Caco-2 (cell line): ENCODE measurements at regions of chr17 and their contacts with region 1.

Region 1: DNA sequence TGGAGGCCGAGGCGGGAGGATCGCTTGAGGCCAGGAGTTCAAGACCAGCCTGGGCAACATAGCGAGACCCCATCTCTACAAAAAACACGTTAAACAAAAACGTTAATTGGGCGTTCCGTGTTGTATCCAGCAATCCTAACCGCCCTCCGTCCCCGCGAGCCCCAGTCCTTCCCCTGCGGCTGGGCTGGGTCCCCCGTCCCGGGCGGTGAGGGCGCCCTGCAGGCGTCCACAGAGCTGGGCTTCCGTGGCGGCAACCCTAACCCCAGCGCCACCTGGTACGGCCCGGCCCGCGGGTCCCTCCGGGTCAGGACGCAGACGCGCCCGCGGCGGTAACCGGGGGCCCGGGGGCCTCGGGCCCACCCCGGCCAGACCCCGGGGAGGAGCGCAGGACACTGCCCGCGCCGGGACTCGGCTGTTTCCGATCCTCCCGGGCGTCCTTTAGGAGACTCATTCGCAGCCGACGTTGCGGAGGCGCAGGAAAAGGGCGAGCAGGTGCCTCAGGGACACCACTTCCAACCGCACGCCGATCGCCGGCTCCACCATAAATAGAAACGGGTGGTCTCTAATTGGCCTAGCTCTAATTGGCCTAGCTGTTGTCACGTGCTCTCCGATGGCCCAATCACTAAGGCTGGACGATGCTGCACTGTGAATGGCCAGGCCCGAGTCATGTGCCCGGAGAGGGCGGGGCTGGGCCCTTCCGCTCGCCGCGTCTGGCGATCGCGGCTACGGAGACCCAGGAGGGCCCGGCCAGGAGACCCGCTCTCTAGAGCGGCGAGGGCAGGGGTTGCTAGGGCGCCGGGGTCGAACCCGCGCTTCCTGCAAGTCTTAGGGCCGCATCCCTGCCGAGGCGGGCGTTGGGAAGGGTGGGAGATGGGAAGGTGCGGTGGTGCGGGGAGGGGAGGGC is 19.0 kb upstream of the CSNK1D start:
- DNase-seq: peak; percentile 97 to 98
- H3K4me3 ChIP-seq: peak overlapping the region; percentile 83
- H3K4me3 Mint-ChIP-seq: peak overlapping the region; percentile 75
- H3K27ac Mint-ChIP-seq: peak overlapping the region; percentile 73
- H3K4me1 ChIP-seq: peaks cover 67% of the 10 kb centered on the region
- H3K4me1 Mint-ChIP-seq: peaks cover 46% of the 10 kb centered on the region
- H3K27me3 ChIP-seq: no peaks in the 10 kb centered on the region
- H3K27me3 Mint-ChIP-seq: no peaks in the 10 kb centered on the region
- CTCF ChIP-seq: no peak

Region 2: GRCh38 chr17:82267575-82268379 is 24.7 kb before region 1 on chr17:
- CTCF ChIA-PET with region 1: interaction called, 5 read pairs
- POLR2A ChIA-PET with region 1: interaction called, 9 read pairs
- intact Hi-C with region 1: loop called (anchors 1 kb)
- DNase-seq: peak; percentile 92 to 95
- H3K4me3 ChIP-seq: peak overlapping the region; percentile 30
- H3K4me3 Mint-ChIP-seq: peak overlapping the region; percentile 73
- H3K27ac Mint-ChIP-seq: peak overlapping the region; percentile 92
- H3K4me1 ChIP-seq: peaks cover 63% of the 10 kb centered on the region
- H3K4me1 Mint-ChIP-seq: peaks cover 55% of the 10 kb centered on the region
- H3K27me3 ChIP-seq: no peaks in the 10 kb centered on the region
- H3K27me3 Mint-ChIP-seq: no peaks in the 10 kb centered on the region
- CTCF ChIP-seq: no peak

Region 3: DNA sequence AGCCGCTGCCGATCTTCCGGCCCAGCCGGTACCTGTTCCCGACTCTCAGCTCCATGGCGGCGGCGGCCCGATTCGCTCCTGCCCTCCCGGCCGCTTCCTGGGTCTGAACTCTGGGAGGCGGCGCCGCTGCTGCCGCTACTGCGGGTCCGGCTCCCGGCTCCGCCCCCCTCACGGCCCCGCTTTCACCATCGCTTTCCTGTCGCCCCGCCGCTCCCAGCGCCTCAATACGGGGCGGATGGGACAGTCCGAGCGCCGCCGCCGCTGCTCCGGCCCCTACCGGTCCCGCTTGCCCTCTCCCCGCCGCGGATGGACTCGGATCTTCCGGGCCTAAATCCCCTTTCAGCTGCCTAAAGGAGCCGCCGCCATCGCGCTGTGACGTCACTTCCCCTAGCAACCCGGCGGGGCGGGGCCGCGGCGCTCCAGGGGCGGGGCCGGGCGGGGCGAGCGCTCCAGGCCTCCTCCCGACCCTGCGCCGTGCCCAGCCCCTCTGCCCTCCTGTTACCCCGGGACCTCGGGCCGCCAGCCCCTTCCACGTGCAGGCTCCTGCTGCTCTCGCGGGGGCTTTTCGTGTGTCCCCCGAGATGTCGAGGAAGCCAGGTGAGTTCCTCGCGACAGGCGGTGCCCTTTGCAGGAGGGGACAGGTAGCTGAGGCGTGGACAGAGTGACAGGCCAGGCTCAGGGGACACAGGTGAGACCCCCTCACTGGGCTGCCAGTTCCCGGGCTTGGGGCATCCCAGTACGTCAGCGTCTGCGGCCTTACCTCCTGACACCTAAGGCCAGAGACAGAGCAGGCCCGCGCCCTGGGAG is 19.0 kb before region 1 on chr17 and contains the start of gene CSNK1D:
- CTCF ChIA-PET with region 1: no interaction called
- POLR2A ChIA-PET with region 1: interaction called, 9 read pairs
- intact Hi-C with region 1: loop called (anchors 2 kb)
- DNase-seq: peak; percentile 88 to 94
- H3K4me3 ChIP-seq: peak within 1 kb of the TSS; percentile 94
- H3K4me3 Mint-ChIP-seq: peak within 1 kb of the TSS; percentile 75
- H3K27ac Mint-ChIP-seq: peak within 1 kb of the TSS; percentile 98
- H3K4me1 ChIP-seq: peaks cover 62% of the 10 kb centered on the region
- H3K4me1 Mint-ChIP-seq: peaks cover 51% of the 10 kb centered on the region
- H3K27me3 ChIP-seq: no peaks in the 10 kb centered on the region
- H3K27me3 Mint-ChIP-seq: no peaks in the 10 kb centered on the region
- CTCF ChIP-seq: no peak
- total RNA-seq, gene CSNK1D: 196 TPM in 2 replicates

Region 4: DNA sequence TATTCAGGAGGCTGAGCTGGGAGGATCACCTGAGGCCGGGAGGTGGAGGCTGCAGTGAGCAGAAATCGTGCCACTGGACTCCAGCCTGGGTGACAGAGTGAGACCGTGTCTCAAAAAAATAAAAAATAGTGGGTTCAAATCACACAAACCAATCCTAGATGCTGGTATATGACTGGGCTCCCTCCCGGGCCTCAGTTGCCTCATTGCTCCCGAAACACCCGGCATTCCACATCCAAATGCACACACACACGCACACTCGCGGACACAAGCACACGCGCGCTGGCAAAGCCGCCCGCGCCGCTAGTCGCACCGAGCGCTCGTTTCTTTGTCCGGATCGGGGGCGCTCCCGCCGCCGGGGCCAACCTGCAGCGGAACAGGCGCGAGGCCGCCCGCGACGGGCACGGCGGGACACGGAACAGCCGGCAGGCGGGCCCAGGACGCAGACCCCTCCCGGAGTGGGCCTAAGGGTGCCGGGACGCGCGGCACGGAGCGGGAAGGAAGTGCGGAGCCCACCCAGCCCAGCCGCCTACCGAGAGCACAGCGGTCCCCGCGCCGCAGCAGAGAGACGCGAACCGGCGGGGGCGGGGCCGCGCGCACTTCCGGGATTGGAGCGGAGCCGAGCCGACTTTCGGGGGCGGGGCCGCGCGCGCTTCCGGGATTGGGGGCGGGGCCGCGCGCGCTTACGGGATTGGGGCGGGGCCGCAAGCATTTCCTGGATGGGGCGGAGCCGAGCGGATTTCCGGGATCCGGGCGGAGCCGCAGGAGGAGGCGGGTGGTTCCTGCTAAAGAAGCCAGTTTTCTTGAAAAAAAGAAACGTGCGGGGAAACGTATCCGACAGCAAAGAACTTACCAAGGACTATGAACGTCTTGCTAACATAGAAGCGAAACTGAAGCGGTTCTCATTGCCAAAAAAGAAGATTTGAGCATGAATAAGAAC is 157.9 kb after region 1 on chr17 and contains the start of gene CYBC1:
- CTCF ChIA-PET with region 1: no interaction called
- POLR2A ChIA-PET with region 1: no interaction called
- intact Hi-C with region 1: no loop called
- DNase-seq: peak; percentile 92 to 96
- H3K4me3 ChIP-seq: peak within 1 kb of the TSS; percentile 85
- H3K4me3 Mint-ChIP-seq: peak within 1 kb of the TSS; percentile 83
- H3K27ac Mint-ChIP-seq: peak within 1 kb of the TSS; percentile 89
- H3K4me1 ChIP-seq: peaks cover 15% of the 10 kb centered on the region
- H3K4me1 Mint-ChIP-seq: no peaks in the 10 kb centered on the region
- H3K27me3 ChIP-seq: no peaks in the 10 kb centered on the region
- H3K27me3 Mint-ChIP-seq: no peaks in the 10 kb centered on the region
- CTCF ChIP-seq: no peak
- total RNA-seq, gene CYBC1: 99.6 and 99.9 TPM in 2 replicates